ENCODE measurements at regions of chr16 and their contacts with region 1.

Region 1: DNA sequence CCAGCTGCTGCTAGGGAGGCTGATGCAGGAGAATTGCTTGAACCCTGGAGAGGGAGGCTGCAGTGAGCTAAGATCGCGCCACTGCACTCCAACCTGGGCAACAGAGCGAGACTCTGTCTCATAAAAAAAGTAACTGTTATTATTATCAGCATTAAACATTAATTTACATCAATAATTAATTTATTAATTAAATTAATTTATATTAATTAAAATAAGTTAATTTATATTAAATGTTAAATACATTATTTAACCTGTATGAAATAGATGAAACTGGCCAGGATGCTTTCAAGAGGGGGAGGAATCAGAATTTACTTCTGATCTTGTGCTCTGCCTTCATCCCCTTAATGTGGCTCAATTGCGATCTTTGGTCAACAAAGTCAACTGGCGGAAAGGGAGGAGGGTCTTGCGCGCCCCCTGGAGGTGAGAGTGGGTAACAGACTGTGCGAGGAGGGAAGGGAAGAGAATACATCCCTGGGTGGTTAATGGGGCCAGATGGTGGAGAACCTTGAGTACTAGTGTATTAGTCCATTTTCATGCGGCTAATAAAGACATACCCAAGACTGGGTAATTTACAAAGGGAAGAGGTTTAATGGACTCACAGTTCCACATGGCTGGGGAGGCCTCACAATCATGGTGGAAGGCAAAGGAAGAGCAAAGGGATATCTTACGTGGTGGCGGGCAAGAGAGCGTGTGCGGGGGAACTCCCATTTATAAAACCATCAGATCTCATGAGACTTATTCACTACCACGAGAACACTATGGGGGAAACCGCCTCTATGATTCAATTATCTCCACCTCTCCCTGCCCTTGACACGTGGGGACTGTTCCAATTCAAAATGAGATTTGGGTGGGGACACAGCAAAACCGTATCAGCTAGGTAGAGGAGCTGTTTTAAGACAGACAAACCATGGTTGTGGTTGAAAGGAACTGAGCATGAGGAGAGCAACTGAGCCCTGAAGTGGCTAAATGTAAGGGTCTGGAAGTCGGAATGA is 15.7 kb upstream of the CPPED1 start:
- DNase-seq: peak; percentile 80 to 85 (median 82)
- ATAC-seq: peak; percentile 88
- H3K4me3 ChIP-seq: no peak overlapping the region
- H3K27ac ChIP-seq: no peak overlapping the region
- H3K4me1 ChIP-seq: no peaks in the 10 kb centered on the region
- H3K27me3 ChIP-seq: peaks cover 3% of the 10 kb centered on the region in 2 experiments; a peak in 3 of 5 replicates
- CTCF ChIP-seq: peak; percentile 82 to 88 (median 86)
- EP300 ChIP-seq: no peak
- POLR2A ChIP-seq: no peak
- RAD21 ChIP-seq: peak; percentile 89 to 96

Region 2: GRCh38 chr16:12455287-12455798 is 364.1 kb before region 1 on chr16:
- CTCF ChIA-PET with region 1: no interaction called
- POLR2A ChIA-PET with region 1: no interaction called
- in situ Hi-C with region 1: loop called (anchors 10 kb)
- intact Hi-C with region 1: loop called (anchors 5 kb)
- DNase-seq: peak; percentile 59 to 69 (median 66)
- ATAC-seq: peak; percentile 99
- H3K4me3 ChIP-seq: no peak overlapping the region
- H3K27ac ChIP-seq: no peak overlapping the region
- H3K4me1 ChIP-seq: no peaks in the 10 kb centered on the region
- H3K27me3 ChIP-seq: peaks cover 0 to 55% of the 10 kb centered on the region in 2 experiments; a peak in 2 of 5 replicates
- CTCF ChIP-seq: peak; percentile 83 to 91 (median 84)
- EP300 ChIP-seq: no peak
- POLR2A ChIP-seq: no peak
- RAD21 ChIP-seq: peak; percentile 74 to 87

Region 3: DNA sequence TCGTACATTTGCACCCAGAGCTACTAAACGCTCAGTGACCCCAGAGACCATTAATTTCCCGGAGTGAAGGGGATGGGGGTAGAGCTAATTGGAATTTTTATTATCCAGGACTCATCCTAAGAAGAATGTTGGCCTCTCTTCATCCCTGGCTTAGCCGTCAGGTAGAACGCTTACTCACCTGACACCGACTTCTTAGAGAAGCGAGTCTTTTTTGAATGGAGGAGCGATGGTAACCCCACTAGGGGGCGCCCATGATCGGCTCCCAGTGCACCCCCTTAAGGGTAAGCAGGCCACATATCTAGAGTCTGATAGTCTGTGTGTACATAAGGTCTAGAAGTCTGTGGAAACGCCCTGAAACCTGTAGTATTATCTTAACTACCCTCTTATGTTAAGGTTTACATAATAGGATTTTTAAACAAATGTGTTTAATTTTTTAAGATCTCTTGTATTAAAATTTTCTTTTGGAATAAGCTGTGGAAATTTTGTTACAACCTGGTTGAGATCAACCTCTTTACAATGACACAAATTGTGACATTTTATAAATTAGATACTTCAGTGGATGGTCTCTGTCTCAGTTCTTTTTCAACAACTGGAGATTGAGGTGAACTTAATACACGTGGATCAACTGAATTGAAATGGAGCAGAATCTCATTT is 245.6 kb before region 1 on chr16:
- CTCF ChIA-PET with region 1: interaction called, 17 read pairs
- POLR2A ChIA-PET with region 1: interaction called, 4 read pairs
- in situ Hi-C with region 1: loop called (anchors 5 kb)
- intact Hi-C with region 1: loop called (anchors 1 kb)
- DNase-seq: peak; percentile 80 to 88 (median 87)
- ATAC-seq: peak; percentile 93
- H3K4me3 ChIP-seq: no peak overlapping the region
- H3K27ac ChIP-seq: no peak overlapping the region
- H3K4me1 ChIP-seq: no peaks in the 10 kb centered on the region
- H3K27me3 ChIP-seq: 0 out of 5 replicates have a peak, but pooled peaks cover 0 to 4% of the 10 kb centered on the region in 2 experiments
- CTCF ChIP-seq: peak; percentile 89 to 90 (median 90)
- EP300 ChIP-seq: peak; percentile 41; the same call in 1 of the 2 replicates
- POLR2A ChIP-seq: no peak
- RAD21 ChIP-seq: peak; percentile 88 to 97

Measured in K562 (cell line).